ENCODE measurements at regions of chr7 and their contacts with region 1.

Region 1: GRCh38 chr7:77684030-77684429 is 12.2 kb upstream of the RSBN1L start:
- DNase-seq: peak in 1 of 5 donors; percentile 38
- H3K4me3 ChIP-seq: no peak overlapping the region
- H3K27ac ChIP-seq: no peak overlapping the region
- H3K4me1 ChIP-seq: peaks cover 6% of the 10 kb centered on the region
- H3K27me3 ChIP-seq: no peaks in the 10 kb centered on the region
- CTCF ChIP-seq: no peak
- EP300 ChIP-seq: no peak
- POLR2A ChIP-seq: no peak

Region 2: DNA sequence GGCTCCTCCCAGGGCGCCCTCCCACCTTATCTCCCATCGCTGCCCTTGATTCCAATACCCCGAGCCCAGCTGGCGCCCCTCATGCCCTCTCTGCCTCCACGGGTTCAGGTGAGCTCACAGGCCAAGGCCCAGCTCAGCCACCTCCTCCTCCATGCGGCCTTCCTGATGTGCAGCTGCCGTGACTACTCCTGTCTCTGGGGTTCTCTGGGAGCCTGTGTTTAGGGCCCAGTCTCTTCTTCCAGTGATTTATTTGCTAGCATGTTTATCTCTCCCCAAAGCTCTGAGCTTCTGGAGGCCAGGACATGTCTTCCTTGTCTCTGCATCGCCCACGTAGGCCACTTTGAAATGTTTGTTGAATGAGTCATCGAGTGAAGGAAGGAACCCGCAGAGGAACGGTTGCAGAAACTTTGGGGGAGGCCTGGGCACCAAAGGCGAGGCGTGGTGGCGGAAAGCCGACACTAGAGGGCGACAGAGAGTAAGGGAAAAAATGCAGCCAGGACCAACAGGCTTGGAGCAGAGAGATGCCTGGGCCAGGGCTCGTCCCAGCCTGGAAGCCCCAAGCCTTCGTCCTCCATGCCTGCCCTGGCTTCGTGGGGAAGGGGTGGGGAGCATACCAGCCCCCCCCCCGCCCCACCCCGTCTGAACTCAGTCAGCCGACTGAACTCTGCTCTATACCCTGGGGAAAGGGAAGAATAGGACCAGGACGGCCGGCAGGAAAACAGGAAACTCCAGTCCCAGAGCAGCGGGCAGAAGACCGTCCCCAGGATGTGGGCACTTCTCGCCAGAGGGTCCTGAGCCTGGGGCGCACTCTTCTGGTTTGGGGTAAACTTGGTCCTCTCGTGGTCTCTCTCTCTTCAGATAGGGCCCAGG is 1392.5 kb before region 1 on chr7:
- intact Hi-C with region 1: loop called in 1 of 4 experiments (anchors 10 kb)
- DNase-seq: peak; percentile 89 to 95 (median 93)
- H3K4me3 ChIP-seq: peak overlapping the region; percentile 25
- H3K27ac ChIP-seq: peak overlapping the region; percentile 87 to 99
- H3K4me1 ChIP-seq: peaks cover 8% of the 10 kb centered on the region
- H3K27me3 ChIP-seq: no peaks in the 10 kb centered on the region
- CTCF ChIP-seq: peak; percentile 98 to 99 (median 98)
- EP300 ChIP-seq: no peak
- POLR2A ChIP-seq: peak; percentile 23

Region 3: DNA sequence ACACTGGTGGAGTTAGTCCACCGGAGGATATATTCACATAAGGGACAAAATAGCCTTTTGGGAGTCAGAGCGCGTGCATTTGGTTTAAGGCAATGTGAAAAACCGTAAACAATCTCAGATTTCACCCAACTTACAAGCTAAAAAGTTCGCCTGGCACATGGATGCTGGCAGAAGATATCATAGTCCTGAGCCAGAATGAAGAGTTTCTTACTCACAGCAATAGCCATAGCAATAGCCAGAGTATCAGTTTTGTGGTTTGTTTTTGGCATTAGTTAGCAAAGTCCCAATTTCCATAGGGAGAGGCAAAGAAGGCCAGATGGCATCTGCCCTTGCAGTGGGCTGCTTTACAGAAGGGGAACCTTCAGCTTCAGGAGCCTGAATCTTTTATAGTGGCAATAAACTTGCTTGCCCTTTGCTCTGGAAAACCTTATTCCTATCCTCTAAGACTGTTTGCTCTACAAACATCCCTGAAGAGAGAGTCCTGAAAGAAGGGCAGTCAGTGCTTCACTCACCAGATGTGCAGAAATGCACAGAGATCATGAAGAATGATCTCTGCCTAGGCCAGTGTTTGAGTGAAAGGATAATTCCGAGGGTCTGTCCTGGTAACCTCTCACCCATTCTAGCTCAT is 16.5 kb before region 1 on chr7:
- intact Hi-C with region 1: loop called in 1 of 4 experiments (anchors 1 kb)
- DNase-seq: no peak
- H3K4me3 ChIP-seq: no peak overlapping the region
- H3K27ac ChIP-seq: no peak overlapping the region
- H3K4me1 ChIP-seq: peaks cover 1% of the 10 kb centered on the region
- H3K27me3 ChIP-seq: no peaks in the 10 kb centered on the region
- CTCF ChIP-seq: no peak
- EP300 ChIP-seq: no peak
- POLR2A ChIP-seq: no peak

Region 4: GRCh38 chr7:77798394-77799077 is 114.5 kb after region 1 on chr7 and contains the starts of genes PHTF2 and TMEM60:
- intact Hi-C with region 1: no loop called
- DNase-seq: peak; percentile 98 to 99 (median 98)
- H3K4me3 ChIP-seq: peak within 1 kb of the TSS; percentile 90
- H3K27ac ChIP-seq: peak within 1 kb of the TSS; percentile 77 to 85
- H3K4me1 ChIP-seq: peaks cover 9% of the 10 kb centered on the region
- H3K27me3 ChIP-seq: no peaks in the 10 kb centered on the region
- CTCF ChIP-seq: peak in 2 of 3 donors; percentile 58 to 70
- EP300 ChIP-seq: no peak
- POLR2A ChIP-seq: peak; percentile 58
- total RNA-seq, gene PHTF2: 11.4 to 22.2 (median 14.6) TPM
- total RNA-seq, gene TMEM60: 8.1 to 15.7 (median 12.3) TPM

Region 5: GRCh38 chr7:78301407-78301806 is 617.4 kb after region 1 on chr7:
- intact Hi-C with region 1: no loop called
- DNase-seq: no peak
- H3K4me3 ChIP-seq: no peak overlapping the region
- H3K27ac ChIP-seq: no peak overlapping the region
- H3K4me1 ChIP-seq: no peaks in the 10 kb centered on the region
- H3K27me3 ChIP-seq: no peaks in the 10 kb centered on the region
- CTCF ChIP-seq: no peak
- EP300 ChIP-seq: no peak
- POLR2A ChIP-seq: no peak

Measured in ovary (tissue), 10 donors.